ENCODE measurements at regions of chrX and their contacts with region 1.

Region 1: GRCh38 chrX:152958524-152959465 is 35.1 kb downstream of the PNMA5 start:
- DNase-seq: peak; percentile 85
- ATAC-seq: peak; percentile 99
- H3K4me3 ChIP-seq: peak overlapping the region; percentile 11
- H3K27ac ChIP-seq: no peak overlapping the region
- H3K4me1 ChIP-seq: no peaks in the 10 kb centered on the region
- H3K27me3 ChIP-seq: no peaks in the 10 kb centered on the region
- CTCF ChIP-seq: peak; percentile 88
- POLR2A ChIP-seq: no peak
- RAD21 ChIP-seq: peak; percentile 88

Region 2: DNA sequence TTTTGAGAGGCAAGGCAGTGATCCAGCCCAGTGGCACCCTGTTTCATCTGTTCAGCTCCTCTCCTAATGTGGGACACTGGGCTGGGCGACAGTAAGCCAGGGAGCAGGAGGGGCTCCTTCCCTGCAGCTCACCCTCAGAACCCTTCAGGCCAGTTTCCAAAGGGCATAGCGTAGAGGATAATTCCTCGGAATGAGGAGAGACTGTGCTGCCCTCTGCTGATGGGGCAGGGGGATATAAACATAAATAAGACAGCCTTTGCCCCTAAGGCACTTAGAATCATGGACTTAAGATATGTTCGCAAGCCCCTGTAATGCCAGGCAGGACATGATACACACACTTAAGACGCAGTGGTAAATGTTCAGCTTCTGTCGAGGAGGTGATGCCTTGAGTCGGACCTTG is 88.8 kb before region 1 on chrX:
- CTCF ChIA-PET with region 1: no interaction called
- POLR2A ChIA-PET with region 1: no interaction called
- dilution Hi-C with region 1: no loop called
- in situ Hi-C with region 1: no loop called
- intact Hi-C with region 1: no loop called
- DNase-seq: no peak
- ATAC-seq: no peak
- H3K4me3 ChIP-seq: no peak overlapping the region
- H3K27ac ChIP-seq: no peak overlapping the region
- H3K4me1 ChIP-seq: no peaks in the 10 kb centered on the region
- H3K27me3 ChIP-seq: no peaks in the 10 kb centered on the region
- CTCF ChIP-seq: no peak
- POLR2A ChIP-seq: no peak
- RAD21 ChIP-seq: no peak

Region 3: DNA sequence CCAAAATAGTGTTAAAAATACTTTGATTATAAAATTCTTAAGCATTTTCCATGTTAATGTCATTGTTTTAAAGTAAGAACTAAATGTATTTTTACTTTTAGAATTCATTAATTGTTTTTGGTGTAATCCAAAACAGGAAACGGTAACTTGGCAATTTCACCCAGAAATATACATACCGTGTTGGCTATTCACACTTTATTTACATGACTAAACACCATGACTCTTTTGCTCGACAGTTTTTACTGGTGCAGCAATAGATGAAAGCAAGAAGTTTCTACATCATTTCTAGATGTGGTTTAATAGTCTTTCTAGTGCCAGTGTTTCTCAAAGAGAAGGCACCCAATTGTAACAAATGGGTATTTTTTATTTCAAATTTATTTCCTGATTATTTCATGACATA is 194.7 kb after region 1 on chrX:
- CTCF ChIA-PET with region 1: no interaction called
- POLR2A ChIA-PET with region 1: no interaction called
- dilution Hi-C with region 1: no loop called
- in situ Hi-C with region 1: no loop called
- intact Hi-C with region 1: no loop called
- DNase-seq: no peak
- ATAC-seq: no peak
- H3K4me3 ChIP-seq: no peak overlapping the region
- H3K27ac ChIP-seq: no peak overlapping the region
- H3K4me1 ChIP-seq: no peaks in the 10 kb centered on the region
- H3K27me3 ChIP-seq: peaks cover 2% of the 10 kb centered on the region
- CTCF ChIP-seq: no peak
- POLR2A ChIP-seq: no peak
- RAD21 ChIP-seq: no peak

Region 4: DNA sequence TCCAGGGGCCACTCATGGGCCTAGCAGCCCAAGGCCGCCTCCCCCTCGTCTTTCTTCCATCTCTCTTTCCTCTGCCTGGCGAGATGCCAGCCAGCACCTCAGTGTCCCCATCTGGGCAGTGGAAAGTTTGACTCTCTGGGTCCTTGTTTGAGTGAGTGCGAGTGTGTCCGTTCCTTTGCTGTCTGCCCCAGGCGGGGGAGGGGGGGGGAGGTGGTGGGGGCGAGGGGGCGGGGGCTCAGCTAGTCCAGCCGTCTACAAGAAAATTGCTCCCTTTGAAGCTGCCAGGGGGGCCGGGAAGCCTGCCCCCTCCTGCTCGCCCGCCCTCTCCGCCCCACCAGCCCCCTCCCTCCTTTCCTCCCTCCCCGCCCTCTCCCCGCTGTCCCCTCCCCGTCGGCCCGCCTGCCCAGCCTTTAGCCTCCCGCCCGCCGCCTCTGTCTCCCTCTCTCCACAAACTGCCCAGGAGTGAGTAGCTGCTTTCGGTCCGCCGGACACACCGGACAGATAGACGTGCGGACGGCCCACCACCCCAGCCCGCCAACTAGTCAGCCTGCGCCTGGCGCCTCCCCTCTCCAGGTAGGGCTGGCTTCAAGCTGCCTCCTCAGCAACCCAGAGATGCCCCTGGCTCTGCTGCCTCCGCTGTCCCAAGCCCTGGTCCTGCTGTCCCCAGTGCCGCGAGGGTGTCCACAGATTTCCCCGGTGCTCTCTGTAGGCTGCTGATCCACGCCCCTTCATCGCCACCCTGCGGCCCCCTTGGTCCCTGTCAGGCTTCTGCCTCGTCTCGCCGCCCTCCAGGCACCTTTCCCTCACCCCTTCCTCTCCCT is 536.0 kb after region 1 on chrX and contains the start of gene BGN:
- CTCF ChIA-PET with region 1: no interaction called
- POLR2A ChIA-PET with region 1: no interaction called
- dilution Hi-C with region 1: no loop called
- in situ Hi-C with region 1: no loop called
- intact Hi-C with region 1: loop called (anchors 5 kb)
- DNase-seq: peak; percentile 44
- ATAC-seq: peak; percentile 67
- H3K4me3 ChIP-seq: peak within 1 kb of the TSS; percentile 70
- H3K27ac ChIP-seq: peak within 1 kb of the TSS; percentile 90
- H3K4me1 ChIP-seq: peaks cover 20% of the 10 kb centered on the region
- H3K27me3 ChIP-seq: no peaks in the 10 kb centered on the region
- CTCF ChIP-seq: peak; percentile 50
- POLR2A ChIP-seq: 0 out of 2 replicates have a peak, but pooled peaks have one; percentile 47
- RAD21 ChIP-seq: peak; percentile 63
- total RNA-seq, gene BGN: 10.0 and 11.3 TPM in 2 replicates

Region 5: DNA sequence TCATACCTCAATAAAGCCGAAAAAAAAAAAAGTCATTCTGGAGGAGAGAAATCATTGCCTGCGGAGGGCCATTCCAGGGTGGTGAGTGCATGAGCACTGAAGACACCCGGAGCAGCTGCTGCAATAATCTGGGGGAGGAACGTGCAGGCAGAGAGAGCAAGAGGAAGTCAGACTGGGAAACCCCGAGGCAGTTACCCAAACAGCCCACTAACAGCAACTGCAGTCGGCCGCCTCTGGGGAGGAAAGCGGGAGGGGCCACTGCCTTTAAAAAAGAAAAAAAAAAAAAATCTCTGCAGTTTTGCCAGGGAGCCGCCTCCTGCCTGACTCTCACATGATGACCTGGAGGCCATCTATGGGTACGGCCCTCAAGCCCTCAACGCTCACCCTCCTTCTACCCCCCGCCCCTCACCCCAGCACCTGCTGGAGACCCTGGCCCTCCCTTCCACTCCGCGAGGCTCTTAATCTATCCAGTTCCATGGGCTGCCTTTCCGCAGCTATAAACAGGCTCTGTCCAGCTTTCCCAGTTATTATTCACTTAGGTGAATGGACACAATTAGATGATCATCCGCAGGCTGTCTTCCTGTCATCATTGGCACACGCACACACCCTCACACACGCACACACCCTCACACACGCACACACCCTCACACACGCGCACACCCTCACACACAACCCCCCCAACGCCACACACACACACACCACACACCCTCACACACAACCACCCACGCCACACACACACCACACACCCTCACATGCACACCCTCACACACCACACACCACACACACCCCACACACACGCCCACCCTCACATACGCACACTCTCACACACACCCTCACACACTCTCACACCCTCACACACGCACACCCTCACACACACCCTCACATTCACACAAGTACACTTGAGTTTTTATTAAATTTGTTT is 942.3 kb after region 1 on chrX:
- CTCF ChIA-PET with region 1: no interaction called
- POLR2A ChIA-PET with region 1: no interaction called
- dilution Hi-C with region 1: no loop called
- in situ Hi-C with region 1: loop called (anchors 25 kb)
- intact Hi-C with region 1: no loop called
- DNase-seq: peak; percentile 87
- ATAC-seq: peak; percentile 96
- H3K4me3 ChIP-seq: no peak overlapping the region
- H3K27ac ChIP-seq: peak overlapping the region; percentile 7; the same call in 1 of the 2 replicates
- H3K4me1 ChIP-seq: peaks cover 9% of the 10 kb centered on the region; the same call in 1 of the 2 replicates
- H3K27me3 ChIP-seq: peaks cover 8% of the 10 kb centered on the region
- CTCF ChIP-seq: no peak
- POLR2A ChIP-seq: no peak
- RAD21 ChIP-seq: no peak

Region 6: GRCh38 chrX:154534862-154535670 is 1576.3 kb after region 1 on chrX:
- CTCF ChIA-PET with region 1: no interaction called
- POLR2A ChIA-PET with region 1: no interaction called
- dilution Hi-C with region 1: no loop called
- in situ Hi-C with region 1: loop called (anchors 25 kb)
- intact Hi-C with region 1: no loop called
- DNase-seq: peak; percentile 79
- ATAC-seq: peak; percentile 83
- H3K4me3 ChIP-seq: no peak overlapping the region
- H3K27ac ChIP-seq: no peak overlapping the region
- H3K4me1 ChIP-seq: peaks cover 2% of the 10 kb centered on the region; the same call in 1 of the 2 replicates
- H3K27me3 ChIP-seq: no peaks in the 10 kb centered on the region
- CTCF ChIP-seq: peak; percentile 100
- POLR2A ChIP-seq: peak; percentile 54; the same call in 1 of the 2 replicates
- RAD21 ChIP-seq: peak; percentile 99

Region 7: GRCh38 chrX:154714925-154715324 is 1756.1 kb after region 1 on chrX:
- CTCF ChIA-PET with region 1: no interaction called
- POLR2A ChIA-PET with region 1: no interaction called
- dilution Hi-C with region 1: no loop called
- in situ Hi-C with region 1: no loop called
- intact Hi-C with region 1: loop called (anchors 10 kb)
- DNase-seq: peak; percentile 50
- ATAC-seq: peak; percentile 83
- H3K4me3 ChIP-seq: no peak overlapping the region
- H3K27ac ChIP-seq: no peak overlapping the region
- H3K4me1 ChIP-seq: peaks cover 7% of the 10 kb centered on the region; the same call in 1 of the 2 replicates
- H3K27me3 ChIP-seq: no peaks in the 10 kb centered on the region
- CTCF ChIP-seq: peak; percentile 68
- POLR2A ChIP-seq: no peak
- RAD21 ChIP-seq: peak; percentile 72

Measured in IMR-90 (cell line).